Transverse colon (tissue), 4 donors: ENCODE measurements at regions of chr13 and their contacts with region 1.

Region 1: GRCh38 chr13:44969551-44970484 is 19.5 kb downstream of the NUFIP1 start:
- DNase-seq: no peak
- H3K4me3 ChIP-seq: no peak overlapping the region
- H3K27ac ChIP-seq: peak overlapping the region in 3 of 4 donors; percentile 30 to 52 (median 43)
- H3K4me1 ChIP-seq: peaks cover 0 to 29% (median 4%) of the 10 kb centered on the region in 4 donors
- H3K27me3 ChIP-seq: no peaks in the 10 kb centered on the region
- CTCF ChIP-seq: peak; percentile 75 to 87 (median 79)
- EP300 ChIP-seq: no peak
- POLR2A ChIP-seq: no peak

Region 2: GRCh38 chr13:43878892-43879754 is 1090.7 kb before region 1 on chr13 and contains the start of gene CCDC122:
- in situ Hi-C with region 1: no loop called
- intact Hi-C with region 1: loop called (anchors 10 kb)
- DNase-seq: peak; percentile 88
- H3K4me3 ChIP-seq: peak within 1 kb of the TSS; percentile 73 to 93 (median 78)
- H3K27ac ChIP-seq: peak within 1 kb of the TSS; percentile 95 to 97 (median 96)
- H3K4me1 ChIP-seq: peaks cover 3 to 28% (median 17%) of the 10 kb centered on the region in 4 donors
- H3K27me3 ChIP-seq: no peaks in the 10 kb centered on the region
- CTCF ChIP-seq: peak in 1 of 5 experiments; percentile 10
- EP300 ChIP-seq: no peak
- POLR2A ChIP-seq: peak; percentile 95
- total RNA-seq, gene CCDC122: 0.60 to 9.5 (median 5.6) TPM in 3 of 4 donors, not detected in the other

Region 3: DNA sequence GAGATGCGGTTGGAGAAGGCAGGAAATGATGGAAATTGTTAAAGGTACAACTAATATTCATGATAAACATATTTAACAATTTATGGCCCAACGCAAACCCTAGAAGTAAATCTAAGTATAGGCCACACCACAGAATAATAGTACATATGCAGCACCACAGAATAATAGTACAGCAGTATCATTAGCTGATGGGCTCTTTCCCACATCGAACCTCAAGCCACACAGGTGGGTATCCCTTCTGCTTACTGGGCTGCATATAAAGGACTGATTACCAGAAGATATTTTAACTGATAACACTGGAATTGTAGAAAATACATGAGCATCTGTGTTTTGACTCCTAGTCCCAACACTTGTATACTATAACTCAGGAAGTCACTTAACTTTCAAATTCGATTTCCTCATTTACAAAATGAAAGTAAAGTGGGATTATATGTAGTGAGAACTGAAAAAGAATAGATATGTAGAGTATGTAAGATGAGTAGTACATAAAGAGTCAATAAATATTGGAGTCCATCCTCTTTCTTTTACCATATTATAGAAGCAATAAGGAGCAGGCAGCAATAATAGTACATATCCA is 485.2 kb before region 1 on chr13:
- in situ Hi-C with region 1: loop called in 3 of 4 experiments (anchors 10 to 25 kb)
- intact Hi-C with region 1: loop called (anchors 5 kb)
- DNase-seq: no peak
- H3K4me3 ChIP-seq: no peak overlapping the region
- H3K27ac ChIP-seq: no peak overlapping the region
- H3K4me1 ChIP-seq: peaks cover 0 to 10% (median 3%) of the 10 kb centered on the region in 4 donors
- H3K27me3 ChIP-seq: no peaks in the 10 kb centered on the region
- CTCF ChIP-seq: no peak
- EP300 ChIP-seq: no peak
- POLR2A ChIP-seq: no peak

Region 4: DNA sequence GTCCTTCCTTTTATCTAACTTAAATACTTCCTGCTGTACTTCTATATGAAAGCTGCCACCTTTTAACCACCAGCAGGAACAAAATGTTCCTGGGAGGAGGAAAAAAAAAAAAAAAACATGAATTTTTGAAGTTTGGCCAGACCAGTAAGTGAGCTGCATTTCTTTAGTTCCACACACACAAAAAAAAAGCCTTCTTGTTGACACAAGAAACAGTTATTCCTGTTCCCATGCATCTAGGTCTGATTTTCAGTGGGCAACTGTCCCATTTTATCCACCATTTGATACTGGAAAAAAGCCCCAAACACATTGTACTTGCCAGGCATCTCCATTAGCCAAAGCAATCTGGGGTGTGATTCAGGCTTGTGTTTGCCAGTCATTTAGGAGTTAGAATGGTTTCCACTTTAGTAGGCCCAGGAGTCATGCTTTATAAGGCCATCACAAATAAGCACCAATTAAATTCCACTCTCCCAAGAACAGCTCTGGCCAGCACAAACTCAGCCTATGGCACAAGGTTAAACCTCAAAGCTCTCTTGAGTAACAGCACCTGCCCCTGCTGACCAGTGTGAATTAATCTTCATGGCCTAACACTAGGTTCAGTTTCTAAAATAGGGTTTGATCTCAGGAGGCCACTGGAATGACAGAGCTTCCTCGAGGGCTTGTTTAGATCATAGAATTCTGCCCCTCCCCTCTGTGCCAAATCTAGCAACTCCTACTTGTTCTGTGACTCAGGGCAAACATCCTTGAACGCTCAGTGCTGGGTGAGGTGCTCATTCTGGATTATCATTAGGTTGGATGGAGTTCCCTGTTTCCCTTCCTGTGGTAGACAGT is 47.7 kb before region 1 on chr13:
- in situ Hi-C with region 1: no loop called
- intact Hi-C with region 1: loop called (anchors 10 kb)
- DNase-seq: peak; percentile 31
- H3K4me3 ChIP-seq: no peak overlapping the region
- H3K27ac ChIP-seq: peak overlapping the region; percentile 90 to 94 (median 92)
- H3K4me1 ChIP-seq: peaks cover 18 to 34% (median 25%) of the 10 kb centered on the region in 4 donors
- H3K27me3 ChIP-seq: no peaks in the 10 kb centered on the region
- CTCF ChIP-seq: no peak
- EP300 ChIP-seq: peak; percentile 51
- POLR2A ChIP-seq: peak; percentile 10